Thyroid gland (tissue), 4 donors: ENCODE measurements at regions of chr11 and their contacts with region 1.

Region 1: DNA sequence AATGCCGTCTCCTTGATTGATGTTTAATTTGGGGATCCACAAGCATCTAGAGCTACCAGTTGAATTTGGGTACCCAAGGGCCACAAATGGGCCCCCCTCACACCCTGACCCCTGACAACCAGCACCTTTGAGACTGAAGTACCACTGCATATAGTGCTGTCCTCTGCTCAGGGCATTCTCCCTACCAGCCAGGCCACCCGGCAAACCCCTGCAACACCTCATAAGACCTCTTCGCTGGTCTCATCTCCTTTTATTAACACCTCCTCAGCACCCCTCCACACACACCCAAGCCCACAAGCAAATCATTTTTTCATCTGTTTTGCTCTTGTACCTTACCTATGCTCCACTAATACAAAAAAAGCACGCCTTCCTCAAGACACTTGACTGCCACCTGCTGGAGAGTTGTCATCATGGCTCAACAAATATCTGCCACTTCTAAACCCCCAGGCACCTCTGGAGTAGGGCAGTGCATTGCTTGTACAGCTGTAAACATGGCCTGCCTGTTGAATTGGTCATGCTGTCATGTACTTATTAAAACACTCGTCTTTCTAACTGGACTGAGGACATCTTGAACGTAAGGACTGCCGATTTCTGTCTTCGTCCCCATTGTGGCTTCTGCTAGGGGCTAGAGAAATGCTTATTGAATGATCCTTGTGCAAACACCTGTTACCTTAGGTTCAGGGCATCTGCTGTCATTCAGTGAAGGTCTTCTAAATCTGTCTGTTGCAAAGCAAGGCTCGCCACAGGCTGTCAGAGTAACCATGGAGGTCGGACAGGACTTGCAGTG is 66.5 kb downstream of the BMAL1 start:
- DNase-seq: peak; percentile 79 to 85
- H3K4me3 ChIP-seq: no peak overlapping the region
- H3K27ac ChIP-seq: no peak overlapping the region
- H3K4me1 ChIP-seq: peaks cover 21 to 40% of the 10 kb centered on the region in 2 donors
- H3K27me3 ChIP-seq: no peaks in the 10 kb centered on the region
- CTCF ChIP-seq: peak; percentile 27 to 89 (median 78)
- POLR2A ChIP-seq: no peak

Region 2: GRCh38 chr11:12963792-12964536 is 380.2 kb before region 1 on chr11:
- intact Hi-C with region 1: loop called (anchors 5 kb)
- DNase-seq: peak; percentile 68 to 69
- H3K4me3 ChIP-seq: no peak overlapping the region
- H3K27ac ChIP-seq: no peak overlapping the region
- H3K4me1 ChIP-seq: peaks cover 0 to 4% of the 10 kb centered on the region in 2 donors
- H3K27me3 ChIP-seq: no peaks in the 10 kb centered on the region
- CTCF ChIP-seq: peak; percentile 74 to 92 (median 89)
- POLR2A ChIP-seq: no peak

Region 3: GRCh38 chr11:13210424-13210823 is 133.7 kb before region 1 on chr11:
- intact Hi-C with region 1: loop called (anchors 5 kb)
- DNase-seq: peak; percentile 79 to 81
- H3K4me3 ChIP-seq: no peak overlapping the region
- H3K27ac ChIP-seq: no peak overlapping the region
- H3K4me1 ChIP-seq: peaks cover 0 to 25% of the 10 kb centered on the region in 2 donors
- H3K27me3 ChIP-seq: no peaks in the 10 kb centered on the region
- CTCF ChIP-seq: peak; percentile 27 to 91 (median 74)
- POLR2A ChIP-seq: no peak